Posterior vena cava (tissue), 2 donors: ENCODE measurements at regions of chr4 and their contacts with region 1.

Region 1: DNA sequence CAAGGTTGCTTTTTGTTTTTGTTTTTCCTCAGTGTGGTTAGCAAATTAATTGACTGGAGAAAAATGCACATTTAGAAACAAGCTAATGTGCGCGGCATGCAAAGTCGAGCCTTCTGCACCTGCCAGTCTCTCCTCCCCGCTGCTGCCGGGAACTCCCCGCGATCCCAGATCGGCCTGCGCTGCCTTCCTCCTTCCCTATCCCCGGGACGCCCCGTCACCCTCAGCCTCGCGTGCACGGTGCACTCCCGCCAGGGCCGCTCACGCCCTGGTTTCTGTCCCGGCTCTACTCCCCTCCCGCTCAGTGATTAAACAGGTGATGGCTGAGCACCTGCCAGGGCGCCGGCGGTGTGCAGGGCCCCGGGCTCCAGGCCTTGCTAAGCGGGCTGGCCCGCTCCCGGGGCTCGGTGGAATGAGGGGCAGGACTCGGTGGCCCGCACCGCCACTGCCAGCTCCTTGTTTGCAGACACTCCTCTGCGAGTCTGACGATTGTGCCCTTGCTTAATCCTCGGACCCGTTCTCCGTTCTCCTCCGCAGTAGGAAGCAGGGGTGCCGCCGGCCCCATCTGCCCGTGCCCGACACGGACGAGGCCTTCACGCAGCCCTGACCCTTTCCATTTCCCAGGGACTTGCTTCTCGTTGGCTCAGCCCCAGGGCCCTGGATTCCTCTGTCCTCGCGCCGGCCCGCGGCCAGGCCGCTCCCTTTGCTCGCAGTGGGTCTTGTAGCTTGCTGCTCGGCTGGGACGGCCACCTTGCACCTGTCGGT is 143.4 kb downstream of the TRIML1 start:
- DNase-seq: no peak

Region 2: GRCh38 chr4:188262464-188262863 is 20.2 kb before region 1 on chr4:
- intact Hi-C with region 1: loop called in 1 of 2 experiments (anchors 1 kb)
- DNase-seq: no peak